ENCODE measurements at regions of chr7 and their contacts with region 1.

Region 1: GRCh38 chr7:140640727-140641523 is at the start of gene DENND2A:
- DNase-seq: no peak
- H3K4me3 ChIP-seq: peak within 1 kb of the TSS; percentile 86
- CTCF ChIP-seq: no peak

Region 2: DNA sequence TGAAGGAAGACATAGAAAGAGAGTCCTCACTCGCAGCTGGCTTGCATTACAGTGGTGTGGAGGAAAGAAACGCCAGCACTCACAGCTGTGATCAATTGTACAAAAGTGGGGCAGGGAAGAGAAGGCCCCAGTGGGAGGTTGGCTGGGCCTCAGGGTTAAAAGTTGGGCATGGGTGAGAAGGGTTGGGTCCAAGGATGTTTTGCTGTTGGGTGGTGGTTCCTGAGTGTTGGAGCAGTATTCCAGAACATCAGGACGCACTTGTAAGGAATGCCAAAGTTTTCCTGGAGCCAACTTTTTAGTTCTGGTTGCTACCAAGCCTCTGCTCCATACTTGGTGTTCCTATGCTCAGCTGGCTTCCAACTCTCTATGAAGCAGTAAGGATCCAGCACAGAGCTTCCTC is 106.2 kb before region 1 on chr7:
- in situ Hi-C with region 1: loop called (anchors 5 kb)
- DNase-seq: no peak
- H3K4me3 ChIP-seq: no peak overlapping the region
- CTCF ChIP-seq: no peak

Region 3: GRCh38 chr7:140564643-140565042 is 76.3 kb before region 1 on chr7:
- in situ Hi-C with region 1: no loop called
- DNase-seq: no peak
- H3K4me3 ChIP-seq: no peak overlapping the region
- CTCF ChIP-seq: no peak

Region 4: GRCh38 chr7:140596519-140597427 is 44.2 kb before region 1 on chr7:
- in situ Hi-C with region 1: loop called (anchors 5 kb)
- DNase-seq: peak; percentile 90
- H3K4me3 ChIP-seq: no peak overlapping the region
- CTCF ChIP-seq: no peak

Region 5: GRCh38 chr7:140707132-140707531 is 66.2 kb after region 1 on chr7:
- in situ Hi-C with region 1: no loop called
- DNase-seq: no peak
- H3K4me3 ChIP-seq: no peak overlapping the region
- CTCF ChIP-seq: no peak